ENCODE measurements at regions of chr6 and their contacts with region 1.

Region 1: DNA sequence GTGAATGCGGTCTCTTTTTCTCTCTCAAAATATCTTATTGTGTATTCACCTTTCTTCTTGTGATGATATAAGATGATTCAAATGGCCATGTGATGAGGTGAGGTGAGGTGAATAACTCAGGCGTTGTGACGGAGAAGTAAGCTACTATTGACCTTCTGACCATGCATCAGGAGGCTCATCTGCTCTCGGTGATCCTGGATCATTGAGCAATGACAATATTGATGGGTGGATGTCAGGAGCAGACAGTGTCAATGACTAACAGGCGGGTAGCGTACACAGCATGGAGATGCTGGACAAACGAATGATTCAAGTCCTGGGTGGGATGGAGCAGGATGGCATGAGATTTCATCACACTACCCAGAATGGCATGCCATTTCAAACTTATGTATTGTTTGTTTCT is 119.6 kb downstream of the PXDC1 start:
- DNase-seq: no peak
- ATAC-seq: no peak
- H3K4me3 ChIP-seq: no peak overlapping the region
- H3K27ac ChIP-seq: no peak overlapping the region
- H3K4me1 ChIP-seq: 0 out of 2 replicates have a peak, but pooled peaks cover 4% of the 10 kb centered on the region
- H3K27me3 ChIP-seq: peaks cover 2 to 33% of the 10 kb centered on the region in 2 experiments; a peak in 4 of 5 replicates
- CTCF ChIP-seq: no peak
- EP300 ChIP-seq: no peak
- POLR2A ChIP-seq: no peak
- RAD21 ChIP-seq: no peak

Region 2: GRCh38 chr6:3620389-3620788 is 11.5 kb before region 1 on chr6:
- CTCF ChIA-PET with region 1: no interaction called
- POLR2A ChIA-PET with region 1: no interaction called
- in situ Hi-C with region 1: no loop called
- intact Hi-C with region 1: loop called (anchors 1 kb)
- DNase-seq: no peak
- ATAC-seq: no peak
- H3K4me3 ChIP-seq: no peak overlapping the region
- H3K27ac ChIP-seq: no peak overlapping the region
- H3K4me1 ChIP-seq: 0 out of 2 replicates have a peak, but pooled peaks cover 4% of the 10 kb centered on the region
- H3K27me3 ChIP-seq: peaks cover 4 to 71% of the 10 kb centered on the region in 2 experiments; a peak in 4 of 5 replicates
- CTCF ChIP-seq: no peak
- EP300 ChIP-seq: no peak
- POLR2A ChIP-seq: no peak
- RAD21 ChIP-seq: no peak

Measured in HepG2 (cell line).